Caco-2 (cell line): ENCODE measurements at regions of chr6 and their contacts with region 1.

Region 1: DNA sequence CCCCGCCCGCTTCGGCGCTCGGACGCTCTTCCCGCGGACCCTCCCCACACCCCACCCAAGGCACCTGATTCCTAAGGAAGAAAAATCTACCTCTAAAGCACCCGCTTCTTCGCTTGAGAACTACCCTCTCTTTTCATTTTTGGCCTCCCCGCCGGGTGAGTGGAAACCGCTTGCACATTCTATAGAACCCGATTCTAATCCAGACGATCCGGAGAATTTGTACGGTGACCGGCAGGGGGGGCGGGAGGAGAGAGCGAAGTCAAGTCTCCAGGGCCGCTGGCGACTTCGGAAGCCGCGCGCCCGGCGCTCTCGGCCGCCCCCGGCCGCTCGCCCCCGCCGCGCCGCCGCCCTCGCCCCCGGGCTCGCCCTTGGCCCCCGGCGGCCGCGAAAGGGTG is at the start of gene RBM24:
- DNase-seq: peak; percentile 71 to 75
- H3K4me3 ChIP-seq: peak within 1 kb of the TSS; percentile 69
- H3K4me3 Mint-ChIP-seq: peak within 1 kb of the TSS; percentile 81
- H3K27ac Mint-ChIP-seq: no peak within 1 kb of the TSS
- H3K4me1 ChIP-seq: peaks cover 9% of the 10 kb centered on the region
- H3K4me1 Mint-ChIP-seq: no peaks in the 10 kb centered on the region
- H3K27me3 ChIP-seq: peaks cover 2% of the 10 kb centered on the region
- H3K27me3 Mint-ChIP-seq: peaks cover 3% of the 10 kb centered on the region
- CTCF ChIP-seq: peak in 1 of 2 experiments; percentile 61
- total RNA-seq, gene RBM24: not detected in 2 replicates

Region 2: GRCh38 chr6:17392978-17393891 is 112.1 kb after region 1 on chr6 and contains the start of gene CAP2:
- CTCF ChIA-PET with region 1: no interaction called
- POLR2A ChIA-PET with region 1: no interaction called
- intact Hi-C with region 1: loop called (anchors 10 kb)
- DNase-seq: peak; percentile 65 to 70
- H3K4me3 ChIP-seq: peak within 1 kb of the TSS; percentile 89
- H3K4me3 Mint-ChIP-seq: peak within 1 kb of the TSS; percentile 81
- H3K27ac Mint-ChIP-seq: peak within 1 kb of the TSS; percentile 96
- H3K4me1 ChIP-seq: peaks cover 10% of the 10 kb centered on the region
- H3K4me1 Mint-ChIP-seq: peaks cover 7% of the 10 kb centered on the region
- H3K27me3 ChIP-seq: no peaks in the 10 kb centered on the region
- H3K27me3 Mint-ChIP-seq: no peaks in the 10 kb centered on the region
- CTCF ChIP-seq: no peak
- total RNA-seq, gene CAP2: 8.5 and 8.9 TPM in 2 replicates

Region 3: GRCh38 chr6:17469006-17469832 is 188.1 kb after region 1 on chr6:
- CTCF ChIA-PET with region 1: no interaction called
- POLR2A ChIA-PET with region 1: no interaction called
- intact Hi-C with region 1: loop called (anchors 10 kb)
- DNase-seq: no peak
- H3K4me3 ChIP-seq: no peak overlapping the region
- H3K4me3 Mint-ChIP-seq: no peak overlapping the region
- H3K27ac Mint-ChIP-seq: no peak overlapping the region
- H3K4me1 ChIP-seq: 0 out of 2 replicates have a peak, but pooled peaks cover 15% of the 10 kb centered on the region
- H3K4me1 Mint-ChIP-seq: peaks cover 7% of the 10 kb centered on the region
- H3K27me3 ChIP-seq: no peaks in the 10 kb centered on the region
- H3K27me3 Mint-ChIP-seq: no peaks in the 10 kb centered on the region
- CTCF ChIP-seq: no peak

Region 4: DNA sequence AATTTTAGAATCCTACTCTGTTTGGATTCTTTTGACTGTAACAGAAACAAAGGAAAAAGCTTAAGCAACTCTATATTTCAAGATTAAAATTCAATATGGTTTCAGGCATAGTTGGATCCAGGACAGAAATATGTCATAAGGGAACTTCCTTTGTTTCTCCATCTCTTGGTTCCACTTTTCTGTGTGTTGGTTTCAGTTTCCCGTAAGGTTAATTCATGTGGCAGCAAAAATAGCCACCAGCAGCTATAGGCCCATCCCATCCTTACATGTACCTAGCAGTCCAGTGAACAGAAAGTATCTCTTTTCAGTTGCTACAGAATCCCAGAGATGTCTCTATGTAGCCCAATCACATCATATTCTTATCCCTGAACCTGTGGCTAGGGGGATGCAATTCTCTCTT is 310.2 kb after region 1 on chr6:
- CTCF ChIA-PET with region 1: no interaction called
- POLR2A ChIA-PET with region 1: no interaction called
- intact Hi-C with region 1: no loop called
- DNase-seq: no peak
- H3K4me3 ChIP-seq: no peak overlapping the region
- H3K4me3 Mint-ChIP-seq: no peak overlapping the region
- H3K27ac Mint-ChIP-seq: no peak overlapping the region
- H3K4me1 ChIP-seq: no peaks in the 10 kb centered on the region
- H3K4me1 Mint-ChIP-seq: peaks cover 12% of the 10 kb centered on the region
- H3K27me3 ChIP-seq: no peaks in the 10 kb centered on the region
- H3K27me3 Mint-ChIP-seq: no peaks in the 10 kb centered on the region
- CTCF ChIP-seq: no peak